ENCODE measurements at regions of chr6 and their contacts with region 1.

Region 1: GRCh38 chr6:31366693-31367470 is 9.9 kb upstream of the HLA-B start:
- DNase-seq: peak; percentile 72 to 98
- ATAC-seq: peak; percentile 97 to 99 (median 98)
- H3K4me3 ChIP-seq: peak overlapping the region; percentile 38
- H3K4me3 Mint-ChIP-seq: peak overlapping the region; percentile 80
- H3K27ac ChIP-seq: no peak overlapping the region
- H3K27ac Mint-ChIP-seq: peak overlapping the region in 1 of 2 donors; percentile 77
- H3K4me1 ChIP-seq: peaks cover 9% of the 10 kb centered on the region
- H3K4me1 Mint-ChIP-seq: peaks cover 8% of the 10 kb centered on the region in 2 donors
- H3K27me3 ChIP-seq: peaks cover 4% of the 10 kb centered on the region
- H3K27me3 Mint-ChIP-seq: peaks cover 51 to 71% of the 10 kb centered on the region in 2 donors
- CTCF ChIP-seq: peak; percentile 87

Region 2: GRCh38 chr6:31139599-31139998 is 227.3 kb before region 1 on chr6:
- intact Hi-C with region 1: loop called (anchors 1 kb)
- DNase-seq: no peak
- ATAC-seq: no peak
- H3K4me3 ChIP-seq: no peak overlapping the region
- H3K4me3 Mint-ChIP-seq: no peak overlapping the region
- H3K27ac ChIP-seq: no peak overlapping the region
- H3K27ac Mint-ChIP-seq: no peak overlapping the region
- H3K4me1 ChIP-seq: peaks cover 6% of the 10 kb centered on the region
- H3K4me1 Mint-ChIP-seq: peaks cover 5 to 6% of the 10 kb centered on the region in 2 donors
- H3K27me3 ChIP-seq: no peaks in the 10 kb centered on the region
- H3K27me3 Mint-ChIP-seq: peaks cover 0 to 3% of the 10 kb centered on the region in 2 donors
- CTCF ChIP-seq: no peak